ENCODE measurements at regions of chr1 and their contacts with region 1.

Region 1: GRCh38 chr1:201553496-201554189 is 14.7 kb downstream of the NAV1 start:
- DNase-seq: no peak
- ATAC-seq: peak in 3 of 8 donors; percentile 4 to 15 (median 9)
- H3K4me3 ChIP-seq: no peak overlapping the region
- H3K27ac ChIP-seq: peak overlapping the region in 9 of 10 donors; percentile 46 to 87 (median 70)
- H3K4me1 ChIP-seq: peaks cover 11 to 84% (median 71%) of the 10 kb centered on the region in 9 donors
- H3K27me3 ChIP-seq: no peaks in the 10 kb centered on the region
- CTCF ChIP-seq: no peak

Region 2: DNA sequence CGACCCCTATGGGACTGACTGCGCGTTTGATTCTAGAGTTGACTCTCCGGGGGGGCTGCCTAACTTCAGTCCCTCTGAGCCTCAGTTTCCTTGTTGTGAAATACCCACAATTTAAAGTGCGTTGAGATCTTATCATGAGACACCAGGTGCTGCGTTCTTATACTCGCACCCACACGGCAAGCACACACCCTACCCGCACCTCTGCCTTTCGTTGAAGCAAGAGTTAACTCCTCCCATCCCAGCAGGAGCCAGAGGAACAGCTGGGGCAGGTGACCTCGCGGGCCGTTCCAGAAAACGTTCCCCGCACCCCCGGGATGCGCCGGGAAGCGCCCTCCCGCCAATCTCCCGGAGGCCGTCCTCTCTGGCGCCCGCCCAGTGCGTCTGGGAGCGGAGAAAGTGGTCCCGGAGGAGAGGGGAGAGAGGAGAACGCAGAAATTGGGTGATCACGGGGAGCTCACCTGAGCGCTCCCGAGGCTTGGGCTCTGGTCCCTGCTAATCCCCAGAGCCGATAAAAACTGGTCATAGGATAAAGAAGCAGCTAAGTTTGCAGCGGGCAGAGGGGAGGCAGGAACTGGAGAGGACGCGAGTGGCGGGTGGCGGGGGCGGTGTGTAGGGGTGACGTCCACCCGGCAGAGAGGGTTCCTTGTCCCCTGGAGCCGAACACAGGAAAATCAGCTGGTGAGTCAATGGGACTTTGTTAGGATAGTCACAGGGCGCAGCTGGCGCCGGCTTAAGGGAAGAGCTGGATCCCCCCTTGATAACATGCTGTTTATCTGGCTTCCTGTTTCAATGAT is 13.9 kb before region 1 on chr1:
- intact Hi-C with region 1: loop called in 1 of 10 experiments (anchors 2 kb)
- DNase-seq: peak; percentile 50 to 72
- ATAC-seq: peak; percentile 37 to 77 (median 56)
- H3K4me3 ChIP-seq: peak overlapping the region; percentile 53 to 86 (median 72)
- H3K27ac ChIP-seq: peak overlapping the region; percentile 84 to 94 (median 89)
- H3K4me1 ChIP-seq: peaks cover 9 to 95% (median 69%) of the 10 kb centered on the region in 9 donors
- H3K27me3 ChIP-seq: peaks cover 0 to 5% (median 0%) of the 10 kb centered on the region in 7 donors
- CTCF ChIP-seq: no peak

Measured in heart right ventricle (tissue), 16 donors.